ENCODE measurements at regions of chr1 and their contacts with region 1.

Region 1: GRCh38 chr1:147890177-147890790 is 12.3 kb upstream of the GJA8 start:
- DNase-seq: peak; percentile 85

Region 2: DNA sequence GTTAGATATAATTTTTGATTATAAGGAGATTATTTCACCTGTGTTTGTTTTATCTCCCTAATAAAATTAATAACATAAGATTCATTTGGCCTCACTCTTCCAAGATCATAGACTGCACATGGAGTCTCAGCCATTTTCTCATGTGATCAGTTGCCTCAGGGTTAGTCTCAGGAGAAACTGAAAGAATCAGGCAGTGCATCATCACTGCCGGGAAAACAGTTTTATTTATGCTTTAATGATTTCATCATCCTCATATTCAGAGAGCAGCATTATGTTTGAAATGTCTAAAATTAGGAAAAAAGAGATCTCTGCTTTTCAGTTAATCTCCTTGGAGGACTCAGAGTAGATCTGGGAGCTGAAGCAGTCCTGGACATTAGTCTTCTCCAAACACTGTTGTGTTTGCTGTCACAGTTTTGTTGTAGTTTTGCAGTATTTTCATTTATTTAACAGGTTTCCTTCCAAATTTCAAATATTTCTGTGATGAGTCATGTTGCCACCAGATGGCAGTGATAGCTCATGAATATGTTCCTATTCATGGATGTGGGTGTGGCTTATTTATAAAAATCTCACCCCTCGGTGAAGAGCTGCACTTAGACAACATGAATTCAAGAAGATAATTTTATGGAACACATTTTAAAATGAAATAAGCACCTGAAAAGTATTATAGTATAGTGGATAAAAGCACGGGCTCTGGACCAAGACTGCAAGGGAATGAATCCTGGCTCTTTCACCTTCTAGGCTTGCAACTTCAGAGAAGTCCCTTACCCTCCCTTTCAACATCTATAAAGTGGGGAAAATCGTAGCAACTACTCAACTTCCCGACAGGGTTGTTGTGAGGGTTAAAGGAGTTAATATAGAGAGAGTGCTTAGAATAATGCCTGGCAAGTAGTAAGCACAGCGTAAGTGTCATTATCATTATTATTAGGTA is 616.6 kb before region 1 on chr1:
- intact Hi-C with region 1: loop called (anchors 10 kb)
- DNase-seq: no peak

Region 3: DNA sequence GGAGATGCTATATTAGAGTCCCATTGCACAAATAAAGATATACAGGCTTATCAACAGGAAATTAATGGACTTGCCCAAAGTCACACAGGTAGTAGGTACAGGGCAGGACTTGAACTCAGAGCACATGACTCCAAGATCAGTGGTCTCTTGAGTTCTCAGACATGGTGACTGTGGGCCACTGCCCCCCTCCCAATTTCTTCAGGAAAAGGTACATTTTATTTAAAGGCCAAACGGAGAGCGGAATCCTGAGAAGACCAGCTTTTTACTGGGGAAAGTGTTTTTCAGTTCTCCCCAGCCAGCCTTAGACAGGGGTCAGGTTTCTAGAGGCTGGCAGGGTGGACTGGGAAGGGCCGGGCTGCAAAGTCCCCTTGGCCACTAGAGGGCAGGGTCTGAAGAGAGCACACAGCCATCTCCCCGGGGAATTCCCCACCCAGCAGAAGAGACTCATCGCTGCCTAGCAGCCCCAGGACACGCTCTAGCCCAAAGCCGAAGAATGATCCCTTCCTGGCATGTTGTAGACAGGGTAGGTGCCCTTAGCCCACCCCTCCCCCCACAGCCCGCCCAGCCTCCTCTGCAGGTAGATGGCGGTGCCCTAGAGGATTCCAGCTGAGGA is 249.6 kb before region 1 on chr1:
- intact Hi-C with region 1: loop called (anchors 2 kb)
- DNase-seq: peak; percentile 85

Region 4: DNA sequence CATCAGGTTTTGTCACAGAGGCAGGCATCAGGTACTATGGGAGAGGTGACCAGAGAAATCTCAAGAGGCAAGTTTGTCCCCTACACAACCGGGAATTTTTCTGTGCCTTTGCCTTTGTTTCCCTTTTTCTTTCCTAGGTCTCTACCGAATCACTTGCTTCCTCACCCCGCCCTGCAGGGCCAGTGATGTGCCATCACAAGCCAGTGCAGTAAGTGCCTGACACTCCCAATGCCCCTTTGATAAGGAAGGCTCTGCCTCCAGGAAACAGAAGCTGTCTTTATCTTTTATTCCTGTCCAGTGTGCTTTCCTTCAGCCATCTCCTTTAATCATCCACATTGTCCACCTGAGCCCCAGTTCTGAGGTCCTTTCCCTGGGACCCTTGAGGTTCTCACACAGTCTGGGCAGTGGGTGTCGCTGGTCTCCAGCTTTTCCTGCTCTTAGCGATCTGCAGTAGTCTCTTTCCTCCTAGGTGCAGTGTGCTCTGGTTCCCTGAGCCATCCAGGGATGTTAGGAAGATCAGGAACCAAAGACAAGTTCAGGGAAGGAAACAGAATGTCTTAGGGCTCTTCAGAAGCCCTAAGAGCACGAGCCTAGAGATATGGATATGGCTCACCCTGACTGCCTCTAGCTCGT is 166.5 kb before region 1 on chr1:
- intact Hi-C with region 1: loop called (anchors 1 kb)
- DNase-seq: no peak

Measured in cardiac septum (tissue), 1 donor.